B cell (primary cell): ENCODE measurements at regions of chr7 and their contacts with region 1.

Region 1: GRCh38 chr7:51162724-51163329 is 153.8 kb downstream of the COBL start:
- DNase-seq: peak; percentile 63
- ATAC-seq: no peak
- H3K4me3 ChIP-seq: no peak overlapping the region
- H3K4me3 Mint-ChIP-seq: no peak overlapping the region
- H3K27ac ChIP-seq: no peak overlapping the region
- H3K27ac Mint-ChIP-seq: no peak overlapping the region
- H3K4me1 ChIP-seq: peaks cover 0 to 8% of the 10 kb centered on the region in 2 donors
- H3K4me1 Mint-ChIP-seq: peaks cover 2% of the 10 kb centered on the region
- H3K27me3 ChIP-seq: peaks cover 0 to 4% (median 2%) of the 10 kb centered on the region in 4 experiments
- H3K27me3 Mint-ChIP-seq: peaks cover 10% of the 10 kb centered on the region
- CTCF ChIP-seq: peak; percentile 83

Region 2: GRCh38 chr7:50119815-50120637 is 1042.8 kb before region 1 on chr7:
- CTCF ChIA-PET with region 1: interaction called, 25 read pairs
- POLR2A ChIA-PET with region 1: no interaction called
- intact Hi-C with region 1: loop called (anchors 1 kb)
- DNase-seq: peak; percentile 57
- ATAC-seq: peak; percentile 83
- H3K4me3 ChIP-seq: no peak overlapping the region
- H3K4me3 Mint-ChIP-seq: peak overlapping the region; percentile 26
- H3K27ac ChIP-seq: peak overlapping the region in 1 of 2 donors; percentile 60
- H3K27ac Mint-ChIP-seq: no peak overlapping the region
- H3K4me1 ChIP-seq: peaks cover 20 to 21% of the 10 kb centered on the region in 2 donors
- H3K4me1 Mint-ChIP-seq: peaks cover 22% of the 10 kb centered on the region
- H3K27me3 ChIP-seq: no peaks in the 10 kb centered on the region
- H3K27me3 Mint-ChIP-seq: no peaks in the 10 kb centered on the region
- CTCF ChIP-seq: peak; percentile 69

Region 3: GRCh38 chr7:50142425-50143017 is 1020.3 kb before region 1 on chr7:
- CTCF ChIA-PET with region 1: interaction called, 15 read pairs
- POLR2A ChIA-PET with region 1: no interaction called
- intact Hi-C with region 1: no loop called
- DNase-seq: peak; percentile 71
- ATAC-seq: peak; percentile 71
- H3K4me3 ChIP-seq: peak overlapping the region in 4 of 5 experiments; percentile 8 to 33 (median 30)
- H3K4me3 Mint-ChIP-seq: peak overlapping the region; percentile 80
- H3K27ac ChIP-seq: peak overlapping the region in 1 of 2 donors; percentile 62
- H3K27ac Mint-ChIP-seq: peak overlapping the region; percentile 62
- H3K4me1 ChIP-seq: peaks cover 42 to 50% of the 10 kb centered on the region in 2 donors
- H3K4me1 Mint-ChIP-seq: peaks cover 49% of the 10 kb centered on the region
- H3K27me3 ChIP-seq: no peaks in the 10 kb centered on the region
- H3K27me3 Mint-ChIP-seq: no peaks in the 10 kb centered on the region
- CTCF ChIP-seq: peak; percentile 94

Region 4: GRCh38 chr7:50467817-50468610 is 694.8 kb before region 1 on chr7:
- CTCF ChIA-PET with region 1: interaction called, 20 read pairs
- POLR2A ChIA-PET with region 1: no interaction called
- intact Hi-C with region 1: no loop called
- DNase-seq: peak; percentile 79
- ATAC-seq: peak; percentile 94
- H3K4me3 ChIP-seq: peak overlapping the region in 3 of 5 experiments; percentile 7 to 56 (median 34)
- H3K4me3 Mint-ChIP-seq: peak overlapping the region; percentile 54
- H3K27ac ChIP-seq: no peak overlapping the region
- H3K27ac Mint-ChIP-seq: no peak overlapping the region
- H3K4me1 ChIP-seq: peaks cover 9 to 10% of the 10 kb centered on the region in 2 donors
- H3K4me1 Mint-ChIP-seq: peaks cover 9% of the 10 kb centered on the region
- H3K27me3 ChIP-seq: no peaks in the 10 kb centered on the region
- H3K27me3 Mint-ChIP-seq: peaks cover 5% of the 10 kb centered on the region
- CTCF ChIP-seq: peak; percentile 81

Region 5: DNA sequence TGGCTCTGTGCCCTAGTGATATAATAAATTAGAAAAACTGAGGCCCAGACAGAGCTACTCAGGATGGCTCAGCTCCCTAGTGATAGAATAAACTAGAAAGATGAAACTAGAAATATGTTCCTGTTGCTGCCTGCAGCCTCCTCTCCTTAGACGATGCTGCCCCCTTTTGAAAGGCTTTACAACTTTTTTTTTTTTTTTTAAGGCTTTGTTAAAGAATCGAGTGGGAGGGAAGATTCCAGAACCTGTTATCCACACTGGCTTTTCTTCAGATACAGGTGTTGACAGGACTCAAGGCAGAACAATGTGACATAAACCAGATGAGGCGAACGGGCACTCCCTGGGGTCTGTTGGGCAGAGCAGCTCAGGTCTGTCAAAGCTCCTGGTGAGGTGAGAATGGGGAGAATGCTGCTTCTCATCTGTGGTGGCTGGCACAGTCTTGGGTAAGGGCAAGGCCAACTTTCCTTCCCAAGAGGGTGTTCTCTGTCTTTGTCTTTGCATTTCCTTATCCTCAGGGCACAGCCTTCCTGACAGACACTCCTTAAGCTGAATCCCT is 21.3 kb before region 1 on chr7:
- CTCF ChIA-PET with region 1: interaction called, 27 read pairs
- POLR2A ChIA-PET with region 1: no interaction called
- intact Hi-C with region 1: no loop called
- DNase-seq: no peak
- ATAC-seq: no peak
- H3K4me3 ChIP-seq: no peak overlapping the region
- H3K4me3 Mint-ChIP-seq: no peak overlapping the region
- H3K27ac ChIP-seq: no peak overlapping the region
- H3K27ac Mint-ChIP-seq: no peak overlapping the region
- H3K4me1 ChIP-seq: no peaks in the 10 kb centered on the region
- H3K4me1 Mint-ChIP-seq: peaks cover 8% of the 10 kb centered on the region
- H3K27me3 ChIP-seq: no peaks in the 10 kb centered on the region
- H3K27me3 Mint-ChIP-seq: peaks cover 7% of the 10 kb centered on the region
- CTCF ChIP-seq: no peak

Region 6: DNA sequence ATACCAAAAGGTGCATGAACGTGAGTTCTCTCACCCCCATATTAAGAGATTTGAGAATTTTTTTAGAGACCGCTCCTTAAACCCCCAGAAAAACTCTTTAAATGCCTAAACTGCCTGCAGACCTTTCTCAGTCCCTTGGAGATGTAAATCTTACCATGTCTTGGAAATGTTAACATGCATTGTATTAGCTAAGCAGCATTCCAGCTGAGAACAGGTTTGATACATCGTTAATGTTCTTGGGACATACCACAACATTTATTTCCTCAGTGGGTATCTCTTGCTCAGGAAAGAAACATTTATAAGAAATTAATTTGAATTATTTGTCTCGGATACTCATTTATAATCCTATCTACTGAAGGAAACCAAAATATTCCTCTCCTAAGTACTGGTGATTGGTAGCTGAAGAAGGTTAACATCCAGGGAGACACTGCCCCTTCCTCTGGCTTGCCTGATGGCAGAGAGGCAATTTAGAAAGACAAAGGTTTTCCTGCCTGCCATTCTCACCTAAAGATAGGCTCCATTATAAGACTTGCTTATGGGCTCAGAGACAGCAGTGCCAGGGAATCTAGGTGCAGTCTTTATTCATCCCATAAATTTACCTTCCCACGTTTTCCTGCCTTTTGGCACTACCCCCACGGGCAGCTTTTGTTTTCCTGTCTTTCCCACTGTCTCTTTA is 12.6 kb after region 1 on chr7:
- CTCF ChIA-PET with region 1: interaction called, 17 read pairs
- POLR2A ChIA-PET with region 1: no interaction called
- intact Hi-C with region 1: no loop called
- DNase-seq: no peak
- ATAC-seq: no peak
- H3K4me3 ChIP-seq: no peak overlapping the region
- H3K4me3 Mint-ChIP-seq: no peak overlapping the region
- H3K27ac ChIP-seq: no peak overlapping the region
- H3K27ac Mint-ChIP-seq: no peak overlapping the region
- H3K4me1 ChIP-seq: no peaks in the 10 kb centered on the region
- H3K4me1 Mint-ChIP-seq: no peaks in the 10 kb centered on the region
- H3K27me3 ChIP-seq: no peaks in the 10 kb centered on the region
- H3K27me3 Mint-ChIP-seq: peaks cover 2% of the 10 kb centered on the region
- CTCF ChIP-seq: no peak

Region 7: DNA sequence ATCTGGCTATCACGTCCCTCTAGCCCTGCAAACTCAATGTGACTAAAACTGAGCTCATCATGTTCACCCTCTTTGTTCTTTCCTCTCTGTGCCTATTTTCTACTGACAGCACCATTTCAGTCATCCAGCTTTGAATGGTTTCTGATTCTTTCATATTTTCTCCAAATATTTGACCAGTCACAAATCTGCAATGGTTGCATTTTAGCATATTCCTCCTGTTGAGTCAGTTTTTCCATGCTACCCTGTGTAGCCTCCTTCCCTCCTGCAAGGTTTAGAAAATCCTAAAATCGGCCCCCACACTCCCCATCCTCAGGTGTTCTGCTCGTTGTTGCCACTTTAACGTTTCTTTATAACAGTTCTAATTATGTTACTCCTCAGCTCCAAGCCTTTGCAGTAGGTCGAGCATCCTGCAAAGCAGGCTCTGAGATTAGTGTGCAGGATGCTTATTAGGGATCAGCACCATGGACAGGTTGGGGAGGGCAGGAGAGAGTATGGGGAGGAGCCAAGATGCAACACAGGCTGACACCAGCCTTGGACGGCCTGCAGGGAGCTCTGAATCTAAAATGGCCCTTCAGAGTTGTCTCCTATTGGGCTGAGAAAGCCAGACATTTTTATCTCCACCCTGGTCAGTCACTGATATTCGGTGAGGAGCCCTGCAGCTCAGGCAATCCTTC is 684.8 kb after region 1 on chr7:
- CTCF ChIA-PET with region 1: no interaction called
- POLR2A ChIA-PET with region 1: no interaction called
- intact Hi-C with region 1: no loop called
- DNase-seq: no peak
- ATAC-seq: no peak
- H3K4me3 ChIP-seq: no peak overlapping the region
- H3K4me3 Mint-ChIP-seq: no peak overlapping the region
- H3K27ac ChIP-seq: no peak overlapping the region
- H3K27ac Mint-ChIP-seq: no peak overlapping the region
- H3K4me1 ChIP-seq: no peaks in the 10 kb centered on the region
- H3K4me1 Mint-ChIP-seq: no peaks in the 10 kb centered on the region
- H3K27me3 ChIP-seq: no peaks in the 10 kb centered on the region
- H3K27me3 Mint-ChIP-seq: no peaks in the 10 kb centered on the region
- CTCF ChIP-seq: no peak